ENCODE measurements at regions of chr18 and their contacts with region 1.

Region 1: GRCh38 chr18:50429207-50429948 is 54.5 kb downstream of the SKA1 start:
- DNase-seq: no peak
- H3K4me3 ChIP-seq: no peak overlapping the region
- H3K27ac ChIP-seq: no peak overlapping the region
- H3K4me1 ChIP-seq: no peaks in the 10 kb centered on the region
- H3K27me3 ChIP-seq: no peaks in the 10 kb centered on the region
- CTCF ChIP-seq: peak in 2 of 3 experiments; percentile 5 to 21; a peak in 2 of 4 replicates
- EP300 ChIP-seq: no peak
- POLR2A ChIP-seq: no peak
- RAD21 ChIP-seq: peak; percentile 44 to 45; a peak in 3 of 4 replicates

Region 2: GRCh38 chr18:50388988-50389387 is 40.4 kb before region 1 on chr18:
- CTCF ChIA-PET with region 1: interaction called, 14 read pairs
- POLR2A ChIA-PET with region 1: no interaction called
- DNase-seq: no peak
- H3K4me3 ChIP-seq: no peak overlapping the region
- H3K27ac ChIP-seq: no peak overlapping the region
- H3K4me1 ChIP-seq: no peaks in the 10 kb centered on the region
- H3K27me3 ChIP-seq: no peaks in the 10 kb centered on the region
- CTCF ChIP-seq: no peak
- EP300 ChIP-seq: no peak
- POLR2A ChIP-seq: no peak
- RAD21 ChIP-seq: no peak

Region 3: GRCh38 chr18:50410894-50411293 is 18.5 kb before region 1 on chr18:
- CTCF ChIA-PET with region 1: interaction called, 26 read pairs
- POLR2A ChIA-PET with region 1: no interaction called
- DNase-seq: no peak
- H3K4me3 ChIP-seq: no peak overlapping the region
- H3K27ac ChIP-seq: no peak overlapping the region
- H3K4me1 ChIP-seq: peaks cover 0 to 19% (median 12%) of the 10 kb centered on the region in 4 experiments; a peak in 5 of 7 replicates
- H3K27me3 ChIP-seq: no peaks in the 10 kb centered on the region
- CTCF ChIP-seq: no peak
- EP300 ChIP-seq: no peak
- POLR2A ChIP-seq: no peak
- RAD21 ChIP-seq: no peak

Region 4: GRCh38 chr18:50734886-50735285 is 305.5 kb after region 1 on chr18:
- CTCF ChIA-PET with region 1: no interaction called
- POLR2A ChIA-PET with region 1: no interaction called
- DNase-seq: no peak
- H3K4me3 ChIP-seq: no peak overlapping the region
- H3K27ac ChIP-seq: no peak overlapping the region
- H3K4me1 ChIP-seq: no peaks in the 10 kb centered on the region
- H3K27me3 ChIP-seq: no peaks in the 10 kb centered on the region
- CTCF ChIP-seq: no peak
- EP300 ChIP-seq: no peak
- POLR2A ChIP-seq: no peak
- RAD21 ChIP-seq: no peak